Common myeloid progenitor, CD34-positive (primary cell): ENCODE measurements at regions of chr10 and their contacts with region 1.

Region 1: DNA sequence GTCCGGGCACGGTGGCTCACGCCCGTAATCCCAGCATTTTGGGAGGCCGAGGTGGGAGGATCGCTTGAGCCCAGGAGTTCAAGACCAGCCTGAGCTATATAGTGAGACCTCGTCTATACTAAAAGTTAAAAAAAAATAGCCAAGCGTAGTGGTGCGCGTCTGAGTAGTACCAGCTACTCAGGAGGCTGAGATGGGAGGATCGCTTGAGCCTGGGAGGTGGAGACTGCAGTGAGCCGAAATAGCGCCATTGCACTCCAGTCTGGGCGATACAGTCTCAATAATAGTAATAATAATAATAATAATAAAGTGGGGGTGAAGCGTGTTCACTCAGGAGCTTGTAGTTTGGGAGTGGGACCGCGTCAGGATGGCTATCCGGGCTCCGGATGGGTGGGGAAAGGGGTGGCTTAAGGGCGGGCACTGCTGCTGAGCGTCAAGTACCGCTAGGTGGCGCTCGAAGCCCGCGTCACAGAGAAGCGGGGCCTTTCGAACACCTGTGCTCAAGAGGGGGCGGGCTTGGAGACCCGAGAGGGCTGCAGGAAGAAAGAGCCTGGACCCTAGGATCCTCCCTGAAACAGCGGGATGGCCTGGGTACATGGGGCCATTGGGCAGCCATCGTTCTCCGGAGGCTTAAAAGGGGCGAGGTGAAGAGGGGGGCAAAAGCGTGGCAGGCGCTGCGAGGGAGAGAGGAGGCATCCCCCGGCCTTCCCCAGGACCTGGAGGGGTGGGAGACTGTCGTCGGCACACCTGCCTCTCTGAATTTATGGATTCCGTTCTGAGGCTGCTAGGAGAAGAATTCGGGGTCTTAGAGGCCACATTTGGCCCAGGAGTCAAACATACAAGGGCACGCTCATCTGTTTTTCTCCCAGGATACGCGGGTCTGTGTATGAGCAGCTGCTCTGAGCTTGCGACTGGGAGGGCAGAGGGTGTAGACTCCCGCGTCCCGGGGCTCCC is 14.5 kb downstream of the LBX1 start:
- DNase-seq: peak; percentile 57 to 67 (median 59)
- H3K4me3 ChIP-seq: no peak overlapping the region
- H3K27ac ChIP-seq: no peak overlapping the region
- H3K4me1 ChIP-seq: peaks cover 0 to 30% (median 15%) of the 10 kb centered on the region in 4 experiments
- H3K27me3 ChIP-seq: peaks cover 11 to 99% (median 64%) of the 10 kb centered on the region in 5 experiments

Region 2: DNA sequence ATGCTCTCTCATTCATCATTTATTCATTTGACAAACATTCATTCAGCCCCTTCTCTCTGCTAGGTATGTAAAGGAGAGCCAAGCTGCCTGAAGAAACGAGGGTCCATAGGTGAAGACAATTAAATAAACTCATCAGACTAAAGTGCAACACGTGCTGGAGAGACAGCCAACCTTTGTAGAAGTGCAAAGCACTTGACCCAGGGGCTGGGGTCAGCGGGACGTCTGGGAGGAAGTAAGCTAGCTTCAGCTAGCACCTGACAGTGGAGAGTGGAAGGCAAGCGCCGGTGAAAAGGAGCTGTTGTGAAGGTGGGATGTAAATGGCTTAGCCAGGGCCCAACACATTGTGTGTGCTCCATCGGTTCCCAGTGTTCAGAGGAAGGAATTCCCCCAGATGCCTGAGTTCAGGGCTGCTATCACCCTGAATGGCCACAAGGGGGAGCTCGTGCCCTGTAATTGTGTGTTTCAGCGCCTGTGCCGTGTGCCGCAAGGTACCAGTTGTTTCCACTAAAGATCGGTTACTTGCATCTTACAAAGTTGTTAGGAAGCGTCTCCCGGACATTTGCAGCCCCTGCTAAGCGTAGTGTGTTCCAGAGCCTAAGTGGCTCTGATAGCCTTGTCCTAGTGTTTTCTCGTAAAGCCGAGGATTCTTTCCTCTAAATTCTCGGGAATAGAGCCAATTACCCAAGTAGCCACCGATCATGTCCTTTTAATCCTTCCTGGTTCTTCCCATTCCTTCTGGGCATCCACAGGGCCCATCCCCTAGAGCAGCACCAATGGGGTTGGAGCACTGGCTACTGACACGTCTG is 53.0 kb before region 1 on chr10:
- CTCF ChIA-PET with region 1: interaction called, 13 read pairs
- POLR2A ChIA-PET with region 1: no interaction called
- DNase-seq: peak; percentile 71 to 86 (median 81)
- H3K4me3 ChIP-seq: no peak overlapping the region
- H3K27ac ChIP-seq: no peak overlapping the region
- H3K4me1 ChIP-seq: peaks cover 0 to 2% (median 0%) of the 10 kb centered on the region in 4 experiments
- H3K27me3 ChIP-seq: peaks cover 26 to 94% (median 31%) of the 10 kb centered on the region in 5 experiments

Region 3: DNA sequence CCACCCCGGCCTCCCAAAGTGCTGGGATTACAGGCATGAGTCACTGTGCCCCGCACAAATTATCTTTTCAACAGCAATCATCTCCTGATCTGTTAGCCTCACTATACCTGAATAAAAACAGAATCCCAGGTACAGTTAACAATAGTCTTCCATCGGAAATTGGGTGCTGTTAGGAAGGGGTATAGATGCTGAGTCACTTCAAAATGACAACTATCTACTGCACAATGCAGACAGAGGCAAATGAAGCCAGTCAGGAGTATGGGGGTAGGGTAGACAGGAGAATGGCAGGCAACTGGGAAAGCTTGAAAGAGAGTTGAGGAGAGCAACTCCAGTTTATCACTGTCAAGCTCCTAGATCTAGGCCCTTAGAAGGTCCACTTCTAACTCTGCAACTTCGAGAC is 25.8 kb before region 1 on chr10:
- CTCF ChIA-PET with region 1: no interaction called
- POLR2A ChIA-PET with region 1: no interaction called
- DNase-seq: no peak
- H3K4me3 ChIP-seq: no peak overlapping the region
- H3K27ac ChIP-seq: no peak overlapping the region
- H3K4me1 ChIP-seq: no peaks in the 10 kb centered on the region
- H3K27me3 ChIP-seq: peaks cover 0 to 30% (median 5%) of the 10 kb centered on the region in 5 experiments

Region 4: GRCh38 chr10:101238732-101239105 is 24.0 kb after region 1 on chr10:
- CTCF ChIA-PET with region 1: interaction called, 34 read pairs
- POLR2A ChIA-PET with region 1: no interaction called
- DNase-seq: peak; percentile 44 to 62 (median 62)
- H3K4me3 ChIP-seq: no peak overlapping the region
- H3K27ac ChIP-seq: no peak overlapping the region
- H3K4me1 ChIP-seq: peaks cover 0 to 7% (median under 1%) of the 10 kb centered on the region in 4 experiments
- H3K27me3 ChIP-seq: peaks cover 39 to 98% (median 51%) of the 10 kb centered on the region in 5 experiments

Region 5: DNA sequence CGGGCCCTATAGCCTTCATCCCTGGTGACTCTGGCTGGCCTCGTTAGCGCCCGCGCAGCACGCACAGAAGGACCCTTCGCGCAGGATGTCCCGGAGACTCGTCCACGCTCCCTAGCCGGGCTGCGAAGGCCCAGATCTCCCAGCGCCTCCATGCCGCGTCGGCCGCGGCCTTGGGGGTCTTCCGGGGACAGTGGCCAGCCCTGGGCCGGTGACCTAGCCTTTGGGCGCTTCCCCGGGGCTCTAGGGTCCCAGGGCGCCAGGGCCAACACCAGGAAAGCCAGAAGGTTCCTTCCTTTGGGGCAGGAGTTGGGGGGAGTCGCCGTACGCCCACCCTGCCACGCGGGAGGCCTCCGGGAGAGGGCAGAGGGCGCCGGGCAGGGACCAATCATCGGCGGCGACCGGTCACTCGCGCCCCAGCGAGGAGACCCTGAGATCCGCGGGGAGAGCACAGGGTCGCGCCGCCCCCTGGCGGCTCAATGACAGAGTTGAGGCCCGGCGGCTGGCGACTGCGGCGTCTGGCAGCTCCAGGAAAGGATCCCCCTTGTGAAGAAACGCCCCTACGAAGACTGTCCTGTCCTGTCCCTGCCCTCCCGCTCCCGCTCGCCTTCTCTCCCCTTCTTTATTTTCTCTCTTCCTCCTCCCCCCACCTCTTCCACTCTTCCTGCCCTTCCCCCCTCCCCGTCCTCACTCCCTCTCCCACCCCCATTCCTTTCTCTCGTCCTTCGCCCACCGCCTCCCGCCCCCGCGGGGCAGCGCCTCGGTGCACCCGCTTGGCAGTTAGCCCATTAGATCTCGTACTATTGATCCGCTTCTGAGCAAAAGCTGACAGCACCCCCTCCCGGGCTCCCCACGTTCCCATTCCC is 76.8 kb after region 1 on chr10:
- CTCF ChIA-PET with region 1: interaction called, 87 read pairs
- POLR2A ChIA-PET with region 1: no interaction called
- DNase-seq: peak; percentile 44 to 64 (median 57)
- H3K4me3 ChIP-seq: peak overlapping the region in 4 of 7 experiments; percentile 46 to 68 (median 56)
- H3K27ac ChIP-seq: no peak overlapping the region
- H3K4me1 ChIP-seq: peaks cover 0 to 20% (median 16%) of the 10 kb centered on the region in 4 experiments
- H3K27me3 ChIP-seq: peaks cover 21 to 100% (median 55%) of the 10 kb centered on the region in 5 experiments

Region 6: DNA sequence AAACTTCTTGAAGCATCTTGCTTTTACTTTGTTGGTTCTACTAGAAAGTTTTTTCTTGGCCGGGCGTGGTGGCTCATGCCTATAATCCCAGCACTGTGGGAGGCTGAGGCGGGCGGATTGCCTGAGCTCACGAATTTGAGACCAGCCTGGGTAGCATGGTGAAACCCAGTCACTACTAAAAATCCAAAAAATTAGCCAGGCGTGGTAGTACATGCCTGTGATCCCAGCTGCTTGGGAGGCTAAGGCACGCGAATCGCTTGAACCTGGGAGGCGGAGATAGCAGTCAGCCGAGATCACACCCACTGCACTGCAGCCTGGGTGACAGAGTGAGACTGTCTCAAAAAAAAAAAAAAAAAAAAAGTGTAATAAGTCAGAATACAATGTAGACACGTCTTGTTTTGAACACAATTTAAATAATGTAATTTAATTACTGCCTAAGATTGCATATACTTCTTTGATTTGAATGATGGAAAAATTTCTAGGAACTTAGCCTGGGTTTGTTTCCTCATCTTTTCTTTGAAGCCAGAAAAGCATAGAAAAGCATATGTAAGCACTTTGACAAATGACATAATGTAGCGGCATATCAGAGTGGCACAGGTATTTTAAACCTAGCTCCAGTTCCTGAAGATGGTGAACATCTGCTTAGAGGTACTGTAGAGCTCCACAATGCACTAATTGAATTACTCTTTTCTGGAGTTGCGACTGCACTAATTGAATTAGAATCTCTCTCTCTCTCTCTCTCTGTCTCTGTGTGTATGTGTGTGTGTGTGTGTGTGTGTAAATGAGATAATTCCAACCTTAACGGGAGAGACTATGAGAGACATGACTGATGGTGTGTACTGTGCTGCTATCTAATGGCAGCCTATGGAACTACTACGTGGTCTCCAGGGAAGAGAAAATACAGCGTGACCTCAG is 227.1 kb after region 1 on chr10:
- CTCF ChIA-PET with region 1: interaction called, 18 read pairs
- POLR2A ChIA-PET with region 1: no interaction called
- DNase-seq: peak; percentile 71 to 85 (median 81)
- H3K4me3 ChIP-seq: no peak overlapping the region
- H3K27ac ChIP-seq: no peak overlapping the region
- H3K4me1 ChIP-seq: no peaks in the 10 kb centered on the region
- H3K27me3 ChIP-seq: peaks cover 0 to 7% (median 0%) of the 10 kb centered on the region in 5 experiments

Region 7: GRCh38 chr10:101782811-101783735 is 568.4 kb after region 1 on chr10 and contains the start of gene NPM3:
- CTCF ChIA-PET with region 1: interaction called, 18 read pairs
- POLR2A ChIA-PET with region 1: no interaction called
- DNase-seq: peak; percentile 67 to 88 (median 84)
- H3K4me3 ChIP-seq: peak within 1 kb of the TSS; percentile 66 to 93 (median 86)
- H3K27ac ChIP-seq: peak within 1 kb of the TSS; percentile 46 to 76
- H3K4me1 ChIP-seq: peaks cover 0 to 42% (median 41%) of the 10 kb centered on the region in 4 experiments
- H3K27me3 ChIP-seq: peaks cover 0 to 18% (median 12%) of the 10 kb centered on the region in 5 experiments